Left ventricle myocardium superior (tissue), 1 donor: ENCODE measurements at regions of chr7 and their contacts with region 1.

Region 1: DNA sequence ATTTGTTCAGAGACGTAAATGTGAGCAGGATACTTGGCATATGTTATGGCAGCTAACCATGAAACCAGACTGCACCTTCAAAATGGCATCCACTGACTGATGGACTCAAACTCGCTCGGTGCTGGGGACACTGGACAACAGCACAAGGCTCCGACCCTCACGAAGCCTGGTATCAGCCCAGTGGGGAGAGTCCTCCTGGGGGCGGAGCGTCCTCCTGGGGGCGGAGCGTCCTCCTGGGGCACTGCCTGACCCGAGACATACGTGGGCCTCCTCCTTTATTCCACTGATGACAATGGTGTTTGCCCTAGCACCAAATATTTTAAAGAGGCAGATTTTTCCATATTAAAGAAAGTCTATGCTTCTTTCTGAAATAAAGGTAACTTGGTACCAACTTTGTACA is 39.5 kb downstream of the ESYT2 start:
- DNase-seq: no peak
- ATAC-seq: no peak

Region 2: DNA sequence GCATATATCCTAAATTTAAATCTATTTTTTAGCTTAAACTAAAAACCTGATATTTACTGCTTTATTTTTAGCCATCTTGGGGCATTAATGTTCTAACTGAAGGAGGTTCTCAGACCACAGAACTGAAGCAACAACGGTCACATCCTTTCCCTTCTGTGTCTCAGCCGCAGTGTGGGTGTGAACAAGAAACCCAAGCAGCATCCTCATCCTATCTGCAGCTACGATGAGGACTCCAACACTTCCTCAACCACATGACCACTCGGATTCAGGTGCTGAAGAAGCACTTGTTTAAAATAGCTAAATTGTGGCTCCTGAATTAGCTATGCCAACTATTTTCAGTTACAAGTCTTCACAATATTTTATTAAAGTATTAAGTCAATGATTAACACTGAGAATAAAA is 34.2 kb after region 1 on chr7:
- intact Hi-C with region 1: loop called (anchors 5 kb)
- DNase-seq: no peak
- ATAC-seq: no peak

Region 3: GRCh38 chr7:159296093-159296681 is 506.3 kb after region 1 on chr7:
- intact Hi-C with region 1: no loop called
- DNase-seq: no peak
- ATAC-seq: no peak